ENCODE measurements at regions of chr6 and their contacts with region 1.

Region 1: GRCh38 chr6:133923938-133924593 is 29.0 kb upstream of the TBPL1 start:
- DNase-seq: peak in 13 of 14 experiments; percentile 24 to 81 (median 38)
- ATAC-seq: peak; percentile 86
- H3K4me3 ChIP-seq: no peak overlapping the region
- H3K4me3 Mint-ChIP-seq: no peak overlapping the region
- H3K27ac ChIP-seq: no peak overlapping the region
- H3K27ac Mint-ChIP-seq: no peak overlapping the region
- H3K4me1 ChIP-seq: no peaks in the 10 kb centered on the region
- H3K4me1 Mint-ChIP-seq: no peaks in the 10 kb centered on the region
- H3K27me3 ChIP-seq: peaks cover 0 to 7% of the 10 kb centered on the region in 2 experiments
- H3K27me3 Mint-ChIP-seq: peaks cover 38% of the 10 kb centered on the region
- CTCF ChIP-seq: peak; percentile 87

Region 2: GRCh38 chr6:133568970-133569889 is 354.8 kb before region 1 on chr6:
- CTCF ChIA-PET with region 1: no interaction called
- POLR2A ChIA-PET with region 1: no interaction called
- intact Hi-C with region 1: loop called in 1 of 2 experiments (anchors 2 kb)
- DNase-seq: peak in 5 of 14 experiments; percentile 3 to 23 (median 7)
- ATAC-seq: peak; percentile 73
- H3K4me3 ChIP-seq: peak overlapping the region; percentile 22
- H3K4me3 Mint-ChIP-seq: peak overlapping the region; percentile 86
- H3K27ac ChIP-seq: no peak overlapping the region
- H3K27ac Mint-ChIP-seq: no peak overlapping the region
- H3K4me1 ChIP-seq: no peaks in the 10 kb centered on the region
- H3K4me1 Mint-ChIP-seq: peaks cover 11% of the 10 kb centered on the region
- H3K27me3 ChIP-seq: peaks cover 0 to 14% of the 10 kb centered on the region in 2 experiments
- H3K27me3 Mint-ChIP-seq: peaks cover 69% of the 10 kb centered on the region
- CTCF ChIP-seq: peak; percentile 77

Region 3: GRCh38 chr6:133973109-133973971 is 49.3 kb after region 1 on chr6:
- CTCF ChIA-PET with region 1: interaction called, 8 read pairs
- POLR2A ChIA-PET with region 1: no interaction called
- intact Hi-C with region 1: loop called (anchors 1 to 5 kb)
- DNase-seq: peak in 3 of 14 experiments; percentile 54 to 74 (median 69)
- ATAC-seq: peak; percentile 84
- H3K4me3 ChIP-seq: no peak overlapping the region
- H3K4me3 Mint-ChIP-seq: no peak overlapping the region
- H3K27ac ChIP-seq: no peak overlapping the region
- H3K27ac Mint-ChIP-seq: peak overlapping the region; percentile 16
- H3K4me1 ChIP-seq: peaks cover 9% of the 10 kb centered on the region
- H3K4me1 Mint-ChIP-seq: peaks cover 58% of the 10 kb centered on the region
- H3K27me3 ChIP-seq: no peaks in the 10 kb centered on the region
- H3K27me3 Mint-ChIP-seq: no peaks in the 10 kb centered on the region
- CTCF ChIP-seq: peak; percentile 92

Region 4: DNA sequence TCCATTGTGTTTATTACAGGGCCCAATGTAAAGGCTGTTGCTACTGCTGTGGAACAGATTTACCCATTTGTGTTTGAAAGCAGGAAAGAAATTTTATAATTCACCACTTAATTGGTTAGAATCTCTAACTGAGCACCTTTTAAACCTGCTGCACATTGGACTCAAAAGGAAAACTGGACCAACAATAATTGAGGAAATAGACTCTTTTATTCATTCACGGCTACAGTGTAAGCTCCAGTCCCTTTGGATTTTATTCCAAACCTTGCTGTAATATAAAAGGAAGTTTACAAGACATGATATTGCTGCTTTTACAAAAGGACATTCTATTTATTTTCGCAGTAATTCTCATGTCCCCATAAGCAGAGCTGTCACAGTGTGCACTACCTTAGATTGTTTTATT is 62.9 kb after region 1 on chr6:
- CTCF ChIA-PET with region 1: interaction called, 10 read pairs
- POLR2A ChIA-PET with region 1: no interaction called
- intact Hi-C with region 1: no loop called
- DNase-seq: no peak
- ATAC-seq: no peak
- H3K4me3 ChIP-seq: no peak overlapping the region
- H3K4me3 Mint-ChIP-seq: no peak overlapping the region
- H3K27ac ChIP-seq: no peak overlapping the region
- H3K27ac Mint-ChIP-seq: no peak overlapping the region
- H3K4me1 ChIP-seq: peaks cover 7% of the 10 kb centered on the region
- H3K4me1 Mint-ChIP-seq: peaks cover 40% of the 10 kb centered on the region
- H3K27me3 ChIP-seq: no peaks in the 10 kb centered on the region
- H3K27me3 Mint-ChIP-seq: no peaks in the 10 kb centered on the region
- CTCF ChIP-seq: no peak

Region 5: GRCh38 chr6:134063966-134064445 is 139.9 kb after region 1 on chr6:
- CTCF ChIA-PET with region 1: interaction called, 61 read pairs
- POLR2A ChIA-PET with region 1: interaction called, 5 read pairs
- intact Hi-C with region 1: loop called (anchors 1 kb)
- DNase-seq: peak; percentile 27 to 79 (median 40)
- ATAC-seq: peak; percentile 97
- H3K4me3 ChIP-seq: no peak overlapping the region
- H3K4me3 Mint-ChIP-seq: no peak overlapping the region
- H3K27ac ChIP-seq: no peak overlapping the region
- H3K27ac Mint-ChIP-seq: no peak overlapping the region
- H3K4me1 ChIP-seq: no peaks in the 10 kb centered on the region
- H3K4me1 Mint-ChIP-seq: peaks cover 5% of the 10 kb centered on the region
- H3K27me3 ChIP-seq: no peaks in the 10 kb centered on the region
- H3K27me3 Mint-ChIP-seq: peaks cover 4% of the 10 kb centered on the region
- CTCF ChIP-seq: peak; percentile 73

Region 6: GRCh38 chr6:134097114-134097707 is 173.1 kb after region 1 on chr6:
- CTCF ChIA-PET with region 1: interaction called, 36 read pairs
- POLR2A ChIA-PET with region 1: interaction called, 9 read pairs
- intact Hi-C with region 1: loop called (anchors 1 kb)
- DNase-seq: peak; percentile 27 to 81 (median 54)
- ATAC-seq: peak; percentile 52
- H3K4me3 ChIP-seq: no peak overlapping the region
- H3K4me3 Mint-ChIP-seq: no peak overlapping the region
- H3K27ac ChIP-seq: no peak overlapping the region
- H3K27ac Mint-ChIP-seq: no peak overlapping the region
- H3K4me1 ChIP-seq: no peaks in the 10 kb centered on the region
- H3K4me1 Mint-ChIP-seq: no peaks in the 10 kb centered on the region
- H3K27me3 ChIP-seq: peaks cover 0 to 10% of the 10 kb centered on the region in 2 experiments
- H3K27me3 Mint-ChIP-seq: peaks cover 28% of the 10 kb centered on the region
- CTCF ChIP-seq: peak; percentile 89

Region 7: DNA sequence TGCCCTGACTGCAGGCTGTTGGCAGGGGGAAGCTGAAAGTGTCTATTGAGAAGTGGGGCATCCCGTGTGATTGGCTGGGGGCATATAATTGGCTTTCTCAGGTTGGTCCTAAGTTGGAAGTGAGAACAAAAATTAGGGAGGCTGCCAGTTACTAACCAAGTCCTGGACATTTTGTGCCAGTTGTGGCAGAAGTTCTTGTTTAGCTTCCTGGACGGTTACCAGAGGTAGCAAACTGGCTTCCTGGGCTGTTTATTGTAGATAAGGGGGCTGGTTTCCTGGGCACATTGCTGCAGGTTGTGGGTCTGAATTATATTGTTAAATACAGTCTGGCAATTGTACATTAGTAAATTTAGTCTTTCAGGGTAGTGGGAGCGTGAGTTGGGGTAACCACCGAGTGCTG is 178.9 kb after region 1 on chr6:
- CTCF ChIA-PET with region 1: interaction called, 36 read pairs
- POLR2A ChIA-PET with region 1: no interaction called
- intact Hi-C with region 1: no loop called
- DNase-seq: no peak
- ATAC-seq: no peak
- H3K4me3 ChIP-seq: no peak overlapping the region
- H3K4me3 Mint-ChIP-seq: no peak overlapping the region
- H3K27ac ChIP-seq: no peak overlapping the region
- H3K27ac Mint-ChIP-seq: no peak overlapping the region
- H3K4me1 ChIP-seq: no peaks in the 10 kb centered on the region
- H3K4me1 Mint-ChIP-seq: no peaks in the 10 kb centered on the region
- H3K27me3 ChIP-seq: peaks cover 0 to 8% of the 10 kb centered on the region in 2 experiments
- H3K27me3 Mint-ChIP-seq: peaks cover 30% of the 10 kb centered on the region
- CTCF ChIP-seq: no peak

Measured in CD4-positive, alpha-beta T cell (primary cell).